Dendritic cell treated with granulocyte-macrophage colony-stimulating factor and Interleukin-4, amounts not matched to agents 40 ng/mL and 50 ng/mL, for 4 days (primary cell): ENCODE measurements at regions of chr2 and their contacts with region 1.

Region 1: GRCh38 chr2:176638167-176639015 is 369.1 kb downstream of the MTX2 start:
- H3K4me3 Mint-ChIP-seq: peak overlapping the region; percentile 77
- H3K27ac Mint-ChIP-seq: no peak overlapping the region
- H3K4me1 Mint-ChIP-seq: no peaks in the 10 kb centered on the region
- H3K27me3 Mint-ChIP-seq: peaks cover 58% of the 10 kb centered on the region

Region 2: DNA sequence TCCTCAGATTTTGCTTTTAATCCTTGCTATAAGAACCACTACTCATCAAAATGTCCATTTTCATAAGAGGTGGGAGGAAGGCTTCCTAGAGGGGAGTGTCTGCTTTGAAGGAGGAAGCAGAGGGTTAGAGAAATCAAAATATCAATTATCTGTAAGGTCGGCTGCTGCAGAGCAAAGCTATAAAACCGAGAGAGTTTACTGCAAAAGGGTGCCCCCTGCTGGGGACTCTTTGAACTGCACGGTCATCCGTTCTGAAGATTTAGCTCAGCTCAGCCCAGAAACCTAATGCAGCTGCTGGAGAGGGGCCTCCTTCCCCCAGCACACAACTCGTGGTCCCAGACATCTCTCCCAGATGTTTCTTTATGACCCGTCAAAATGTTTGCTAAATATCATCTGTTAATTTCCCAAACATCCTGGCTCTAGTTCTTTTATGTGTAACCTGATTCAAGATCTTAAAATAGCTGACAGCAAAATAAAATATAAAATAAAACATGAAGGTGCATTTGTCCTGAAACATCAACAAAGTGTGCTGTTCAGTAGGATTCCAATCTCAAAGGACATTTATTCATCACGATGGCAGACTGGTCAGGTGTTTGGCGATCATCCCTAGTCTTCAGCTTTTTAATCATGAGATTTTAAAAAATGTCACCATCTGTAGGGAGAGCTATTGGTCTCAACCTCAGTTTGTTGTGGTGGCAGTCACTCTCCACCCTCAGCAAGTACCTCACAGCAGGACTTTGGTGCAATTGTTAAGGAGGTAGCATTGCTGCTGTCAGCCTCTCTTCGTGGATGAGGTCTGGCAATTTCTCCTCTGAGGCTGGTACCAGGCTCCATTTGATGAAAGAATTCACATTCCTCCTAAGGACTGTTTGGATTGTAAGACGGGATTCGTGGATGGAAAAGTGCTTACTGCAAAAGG is 183.2 kb before region 1 on chr2:
- intact Hi-C with region 1: loop called (anchors 5 kb)
- H3K4me3 Mint-ChIP-seq: no peak overlapping the region
- H3K27ac Mint-ChIP-seq: no peak overlapping the region
- H3K4me1 Mint-ChIP-seq: no peaks in the 10 kb centered on the region
- H3K27me3 Mint-ChIP-seq: peaks cover 21% of the 10 kb centered on the region

Region 3: DNA sequence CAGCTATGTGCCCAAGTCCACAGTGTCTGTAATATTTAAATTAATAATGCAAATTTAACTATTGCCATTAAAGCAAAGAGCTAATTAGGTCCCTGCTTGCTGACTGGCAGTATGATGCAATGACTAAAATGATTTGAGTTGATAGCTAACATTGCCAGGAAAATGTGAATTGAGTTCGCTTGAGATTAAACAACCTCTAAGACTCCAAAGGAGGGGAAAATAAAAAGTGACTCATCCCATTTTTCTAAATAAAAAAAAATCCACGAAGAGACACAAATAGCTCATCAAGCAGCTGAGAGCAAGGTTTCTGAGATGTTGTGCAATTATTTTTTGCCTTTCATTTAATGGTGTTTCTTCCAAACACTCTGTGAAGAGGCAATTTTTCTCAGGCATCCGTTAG is 43.9 kb after region 1 on chr2:
- intact Hi-C with region 1: no loop called
- H3K4me3 Mint-ChIP-seq: no peak overlapping the region
- H3K27ac Mint-ChIP-seq: no peak overlapping the region
- H3K4me1 Mint-ChIP-seq: no peaks in the 10 kb centered on the region
- H3K27me3 Mint-ChIP-seq: peaks cover 10% of the 10 kb centered on the region